H1 (cell line): ENCODE measurements at regions of chr11 and their contacts with region 1.

Region 1: GRCh38 chr11:250740-251299 is 14.0 kb downstream of the PSMD13 start:
- DNase-seq: peak; percentile 51 to 94
- H3K4me3 ChIP-seq: no peak overlapping the region
- H3K27ac ChIP-seq: no peak overlapping the region
- H3K4me1 ChIP-seq: no peaks in the 10 kb centered on the region
- H3K27me3 ChIP-seq: no peaks in the 10 kb centered on the region; a peak in 1 of 7 replicates
- CTCF ChIP-seq: peak; percentile 82 to 94 (median 85)
- EP300 ChIP-seq: no peak
- POLR2A ChIP-seq: no peak
- RAD21 ChIP-seq: peak; percentile 86 to 88

Region 2: DNA sequence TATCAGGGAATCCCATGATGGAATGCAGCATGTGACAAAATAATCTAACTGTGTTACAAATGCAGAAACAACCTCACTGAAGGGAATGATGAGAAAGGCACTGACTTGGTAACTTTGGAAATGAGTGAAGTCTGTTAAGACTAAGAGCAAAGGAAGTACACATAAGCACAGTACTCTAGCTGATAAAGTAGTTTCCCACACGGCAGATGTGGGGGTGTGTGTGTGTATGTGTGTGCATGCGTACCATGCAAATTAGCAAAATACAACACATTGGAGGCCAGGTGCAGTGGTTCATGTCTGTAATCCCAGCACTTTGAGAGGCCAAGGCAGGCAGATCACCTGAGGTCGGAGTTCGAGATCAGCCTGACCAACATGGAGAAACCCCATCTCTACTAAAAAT is 10.8 kb after region 1 on chr11:
- CTCF ChIA-PET with region 1: interaction called, 36 read pairs
- POLR2A ChIA-PET with region 1: interaction called, 4 read pairs
- DNase-seq: no peak
- H3K4me3 ChIP-seq: no peak overlapping the region
- H3K27ac ChIP-seq: no peak overlapping the region
- H3K4me1 ChIP-seq: no peaks in the 10 kb centered on the region
- H3K27me3 ChIP-seq: no peaks in the 10 kb centered on the region
- CTCF ChIP-seq: no peak
- EP300 ChIP-seq: no peak
- POLR2A ChIP-seq: no peak
- RAD21 ChIP-seq: no peak

Region 3: GRCh38 chr11:288328-289144 is 37.7 kb after region 1 on chr11 and contains the start of gene PGGHG:
- CTCF ChIA-PET with region 1: interaction called, 88 read pairs
- POLR2A ChIA-PET with region 1: interaction called, 5 read pairs
- DNase-seq: peak in 1 of 2 experiments; percentile 75
- H3K4me3 ChIP-seq: peak within 1 kb of the TSS; percentile 34 to 59 (median 45)
- H3K27ac ChIP-seq: no peak within 1 kb of the TSS
- H3K4me1 ChIP-seq: peaks cover 0 to 42% (median 32%) of the 10 kb centered on the region in 4 experiments; a peak in 6 of 7 replicates
- H3K27me3 ChIP-seq: peaks cover 5 to 16% (median 13%) of the 10 kb centered on the region in 4 experiments; a peak in 6 of 7 replicates
- CTCF ChIP-seq: no peak
- EP300 ChIP-seq: no peak
- POLR2A ChIP-seq: no peak
- RAD21 ChIP-seq: no peak
- total RNA-seq, gene PGGHG: 52.9 and 60.7 TPM in 2 replicates

Region 4: GRCh38 chr11:304915-305843 is 54.4 kb after region 1 on chr11:
- CTCF ChIA-PET with region 1: interaction called, 52 read pairs
- POLR2A ChIA-PET with region 1: interaction called, 4 read pairs
- DNase-seq: no peak
- H3K4me3 ChIP-seq: peak overlapping the region in 2 of 4 experiments; percentile 3 to 42; a peak in 2 of 8 replicates
- H3K27ac ChIP-seq: peak overlapping the region; percentile 31; the same call in 1 of the 2 replicates
- H3K4me1 ChIP-seq: peaks cover 17 to 46% (median 33%) of the 10 kb centered on the region in 4 experiments
- H3K27me3 ChIP-seq: no peaks in the 10 kb centered on the region; a peak in 1 of 7 replicates
- CTCF ChIP-seq: peak; percentile 19 to 44 (median 31); a peak in 3 of 4 replicates
- EP300 ChIP-seq: no peak
- POLR2A ChIP-seq: no peak
- RAD21 ChIP-seq: peak; percentile 34 to 39

Region 5: GRCh38 chr11:355581-356458 is 105.0 kb after region 1 on chr11:
- CTCF ChIA-PET with region 1: interaction called, 212 read pairs
- POLR2A ChIA-PET with region 1: interaction called, 3 read pairs
- DNase-seq: peak; percentile 66 to 90
- H3K4me3 ChIP-seq: peak overlapping the region in 3 of 4 experiments; percentile 3 to 47 (median 22); a peak in 5 of 8 replicates
- H3K27ac ChIP-seq: peak overlapping the region; percentile 84
- H3K4me1 ChIP-seq: peaks cover 4 to 8% (median 6%) of the 10 kb centered on the region in 4 experiments
- H3K27me3 ChIP-seq: no peaks in the 10 kb centered on the region; a peak in 1 of 7 replicates
- CTCF ChIP-seq: no peak
- EP300 ChIP-seq: 0 out of 3 replicates have a peak, but pooled peaks of 1 of the 2 experiments have one; percentile 57
- POLR2A ChIP-seq: peak in 1 of 2 experiments; percentile 71; a peak in 2 of 3 replicates
- RAD21 ChIP-seq: peak in 1 of 2 experiments; percentile 6; a peak in 2 of 4 replicates

Region 6: GRCh38 chr11:706957-707816 is 456.4 kb after region 1 on chr11:
- CTCF ChIA-PET with region 1: no interaction called
- POLR2A ChIA-PET with region 1: no interaction called
- DNase-seq: no peak
- H3K4me3 ChIP-seq: peak overlapping the region; percentile 38 to 64 (median 49)
- H3K27ac ChIP-seq: no peak overlapping the region
- H3K4me1 ChIP-seq: peaks cover 0 to 48% (median 33%) of the 10 kb centered on the region in 4 experiments; a peak in 6 of 7 replicates
- H3K27me3 ChIP-seq: no peaks in the 10 kb centered on the region
- CTCF ChIP-seq: no peak; a peak in 1 of 4 replicates
- EP300 ChIP-seq: no peak
- POLR2A ChIP-seq: no peak
- RAD21 ChIP-seq: no peak

Region 7: DNA sequence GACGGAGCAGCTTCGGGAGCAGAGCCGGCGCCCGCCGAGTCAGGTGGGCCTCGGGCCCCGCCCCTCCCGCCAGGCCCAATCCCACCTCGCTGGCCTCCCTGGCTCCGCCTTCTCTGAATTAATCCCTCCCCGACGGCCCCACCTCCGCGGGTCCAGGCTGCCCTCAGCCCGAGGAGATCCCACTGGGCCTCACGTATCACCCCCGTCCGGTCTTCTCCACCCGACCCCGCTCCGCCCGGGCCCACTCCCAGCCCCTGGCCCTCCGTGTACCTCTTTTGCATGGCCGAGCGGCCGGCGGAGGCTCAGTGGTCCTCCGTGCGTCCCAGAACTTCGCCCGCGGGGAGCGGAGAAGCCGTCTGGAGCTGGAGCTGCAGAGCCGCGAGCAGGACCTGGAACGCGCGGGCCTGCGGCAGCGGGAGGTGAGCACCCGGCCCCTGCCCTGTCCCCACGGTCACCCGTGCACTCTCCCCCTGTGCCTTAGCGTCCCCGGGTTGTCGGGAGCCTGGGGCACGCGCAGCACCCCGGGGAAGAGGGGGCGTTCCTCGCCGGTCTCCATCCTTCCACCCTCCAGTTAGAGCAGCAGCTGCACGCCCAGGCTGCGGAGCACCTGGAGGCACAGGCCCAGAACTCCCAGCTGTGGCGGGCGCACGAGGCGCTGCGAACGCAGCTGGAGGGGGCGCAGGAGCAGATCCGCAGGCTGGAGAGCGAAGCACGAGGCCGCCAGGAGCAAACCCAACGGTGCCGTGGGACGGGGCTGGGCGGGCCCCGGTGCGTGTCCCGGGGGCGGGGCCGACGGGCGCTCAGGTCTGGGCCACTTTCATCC is 579.7 kb after region 1 on chr11:
- CTCF ChIA-PET with region 1: no interaction called
- POLR2A ChIA-PET with region 1: no interaction called
- DNase-seq: no peak
- H3K4me3 ChIP-seq: peak overlapping the region; percentile 45 to 74 (median 56)
- H3K27ac ChIP-seq: no peak overlapping the region
- H3K4me1 ChIP-seq: peaks cover 0 to 54% (median 47%) of the 10 kb centered on the region in 4 experiments; a peak in 6 of 7 replicates
- H3K27me3 ChIP-seq: peaks cover 6 to 41% (median 31%) of the 10 kb centered on the region in 4 experiments
- CTCF ChIP-seq: peak in 1 of 3 experiments; percentile 12; a peak in 1 of 4 replicates
- EP300 ChIP-seq: no peak
- POLR2A ChIP-seq: no peak
- RAD21 ChIP-seq: no peak